Ascending aorta (tissue), 2 donors: ENCODE measurements at regions of chr20 and their contacts with region 1.

Region 1: DNA sequence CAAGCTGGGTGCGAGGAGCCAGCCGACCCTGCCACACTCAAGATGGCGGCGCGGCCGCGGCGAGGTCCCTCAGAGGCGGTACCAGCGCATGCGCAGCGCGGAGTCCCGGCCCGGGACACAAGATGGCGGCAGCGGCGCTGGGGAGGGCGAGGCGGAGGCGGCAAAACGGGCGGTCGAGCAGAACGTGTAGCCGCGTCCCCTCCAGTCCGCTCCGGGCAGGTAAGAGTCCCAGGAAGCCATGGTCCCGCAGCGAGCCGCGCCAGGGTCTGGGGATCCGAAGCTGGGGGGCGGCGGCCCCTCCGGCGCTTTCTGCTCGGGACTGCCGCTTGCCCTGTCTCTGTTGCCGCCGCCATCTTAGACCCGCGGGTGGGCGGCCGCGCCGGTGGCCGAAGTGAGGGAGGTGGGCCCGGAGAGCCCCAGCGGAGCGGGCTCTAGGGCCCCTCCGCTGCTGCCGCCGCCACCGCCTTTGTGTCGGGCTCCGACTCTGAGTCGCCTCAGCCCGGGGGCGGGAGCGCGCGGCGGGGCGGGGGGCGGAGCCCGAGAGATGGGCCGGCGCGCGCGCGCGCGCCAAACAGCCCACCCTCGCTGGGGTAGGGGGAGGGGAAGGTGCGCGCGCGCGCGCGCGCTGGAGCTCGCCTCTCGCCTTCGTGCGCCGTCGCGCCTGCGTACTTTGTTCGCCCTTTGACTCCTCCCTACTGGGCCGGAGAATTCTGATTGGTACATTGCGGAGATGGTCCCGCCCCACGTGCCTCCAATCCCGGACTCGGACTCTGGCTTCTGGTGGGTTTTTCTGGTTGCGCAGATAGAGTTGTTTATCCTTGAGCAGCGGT is at the start of gene PCIF1:
- DNase-seq: peak; percentile 92 to 99
- H3K4me3 ChIP-seq: peak within 1 kb of the TSS; percentile 73 to 95
- H3K27ac ChIP-seq: peak within 1 kb of the TSS; percentile 98 to 100
- H3K4me1 ChIP-seq: peaks cover 5 to 16% of the 10 kb centered on the region in 2 donors
- H3K27me3 ChIP-seq: no peaks in the 10 kb centered on the region
- CTCF ChIP-seq: no peak
- total RNA-seq, gene PCIF1: 45.7 TPM

Region 2: DNA sequence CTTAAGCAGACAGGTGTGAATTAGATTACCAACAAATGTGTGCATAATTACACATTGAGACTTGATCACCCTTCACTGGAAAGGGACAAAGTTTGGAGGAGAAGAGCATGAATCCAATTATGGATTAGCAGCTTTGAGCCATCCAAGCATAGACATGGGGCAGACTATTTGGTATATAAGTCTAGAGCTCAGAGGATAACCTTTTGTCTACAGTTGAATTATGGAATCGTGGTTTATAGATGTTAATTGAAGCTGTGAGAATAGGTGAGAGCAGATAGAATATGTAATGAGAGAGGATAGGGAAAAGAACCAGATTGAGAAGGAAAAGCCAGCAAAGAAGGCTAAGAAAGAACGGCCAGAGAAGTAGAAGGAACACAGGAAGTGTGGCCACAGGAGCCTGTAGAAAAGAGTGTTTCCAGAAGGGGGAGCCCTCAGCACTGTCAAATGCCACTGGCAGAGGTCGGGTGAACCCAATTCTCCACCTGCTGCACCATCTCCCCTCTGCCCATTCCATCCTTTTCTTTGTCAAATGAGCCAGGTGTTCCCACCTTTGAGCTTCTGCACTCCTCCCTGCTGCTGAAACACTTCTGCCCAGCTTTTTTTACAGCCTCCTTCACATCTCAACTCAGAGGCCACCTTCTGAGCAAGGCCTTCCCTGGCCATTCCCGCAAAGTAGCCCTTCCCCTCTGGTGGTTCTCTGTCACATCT is 135.7 kb before region 1 on chr20:
- intact Hi-C with region 1: loop called (anchors 5 kb)
- DNase-seq: peak in 1 of 2 donors; percentile 82
- H3K4me3 ChIP-seq: no peak overlapping the region
- H3K27ac ChIP-seq: peak overlapping the region; percentile 44 to 51
- H3K4me1 ChIP-seq: no peaks in the 10 kb centered on the region
- H3K27me3 ChIP-seq: no peaks in the 10 kb centered on the region
- CTCF ChIP-seq: peak; percentile 70 to 77 (median 75)

Region 3: DNA sequence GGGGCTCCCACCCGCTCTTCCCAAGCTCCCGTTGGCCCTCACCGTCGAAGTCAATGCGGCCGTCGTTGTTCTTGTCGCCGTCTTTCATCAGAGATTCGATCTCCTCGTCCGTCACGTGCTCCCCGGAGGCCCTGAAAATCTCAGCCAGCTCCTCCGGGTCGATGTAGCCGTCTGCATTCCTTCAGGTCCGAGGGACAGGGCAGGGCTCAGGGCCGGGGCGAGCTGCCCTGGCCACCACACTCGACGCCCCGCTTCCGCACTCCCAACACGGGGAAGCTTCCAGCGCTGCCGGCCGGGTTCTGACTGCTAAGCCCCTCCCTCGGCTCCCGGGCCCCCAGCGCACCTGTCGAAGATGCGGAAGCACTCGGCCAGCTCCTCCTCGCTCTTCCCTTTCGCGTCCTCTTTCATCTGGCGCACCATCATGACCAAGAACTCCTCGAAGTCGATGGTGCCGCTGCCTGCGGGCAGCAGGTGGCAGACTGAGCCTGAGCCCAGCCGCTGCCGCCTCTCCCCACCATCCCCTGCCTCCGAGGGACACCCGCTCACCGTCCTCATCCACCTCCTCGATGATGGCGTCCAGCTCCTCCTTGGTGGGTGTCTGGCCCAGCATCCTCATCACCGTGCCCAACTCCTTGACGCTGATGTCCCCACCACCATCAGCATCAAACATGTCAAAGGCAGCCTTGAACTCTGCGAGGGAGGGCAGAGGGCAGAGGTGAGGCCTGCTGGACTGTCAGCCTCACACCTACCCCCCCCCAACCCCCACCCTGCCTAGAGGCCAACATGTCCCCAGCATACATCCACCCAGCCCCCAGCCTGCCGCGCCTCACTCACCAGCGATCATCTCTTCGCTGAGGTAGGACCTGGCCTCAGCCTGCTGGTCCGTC is 110.6 kb before region 1 on chr20:
- intact Hi-C with region 1: no loop called
- DNase-seq: no peak
- H3K4me3 ChIP-seq: peak overlapping the region; percentile 15 to 27
- H3K27ac ChIP-seq: peak overlapping the region in 1 of 2 donors; percentile 10
- H3K4me1 ChIP-seq: peaks cover 15 to 43% of the 10 kb centered on the region in 2 donors
- H3K27me3 ChIP-seq: no peaks in the 10 kb centered on the region
- CTCF ChIP-seq: peak in 1 of 3 experiments; percentile 44

Region 4: GRCh38 chr20:45857114-45857881 is 77.5 kb before region 1 on chr20 and contains the starts of genes ACOT8 and ZSWIM3:
- intact Hi-C with region 1: loop called (anchors 2 kb)
- DNase-seq: peak; percentile 96 to 99
- H3K4me3 ChIP-seq: peak within 1 kb of the TSS; percentile 95 to 96
- H3K27ac ChIP-seq: peak within 1 kb of the TSS; percentile 62 to 75
- H3K4me1 ChIP-seq: peaks cover 3 to 29% of the 10 kb centered on the region in 2 donors
- H3K27me3 ChIP-seq: no peaks in the 10 kb centered on the region
- CTCF ChIP-seq: no peak
- total RNA-seq, gene ACOT8: 34.4 TPM
- total RNA-seq, gene ZSWIM3: 6.8 TPM

Region 5: GRCh38 chr20:45890985-45891983 is 43.5 kb before region 1 on chr20 and contains the starts of genes CTSA and NEURL2:
- intact Hi-C with region 1: loop called (anchors 1 kb)
- DNase-seq: peak; percentile 76 to 96
- H3K4me3 ChIP-seq: peak within 1 kb of the TSS; percentile 71 to 87
- H3K27ac ChIP-seq: peak within 1 kb of the TSS; percentile 68 to 71
- H3K4me1 ChIP-seq: peaks cover 8 to 12% of the 10 kb centered on the region in 2 donors
- H3K27me3 ChIP-seq: no peaks in the 10 kb centered on the region
- CTCF ChIP-seq: no peak
- total RNA-seq, gene CTSA: 82.0 TPM
- total RNA-seq, gene NEURL2: 4.0 TPM

Region 6: DNA sequence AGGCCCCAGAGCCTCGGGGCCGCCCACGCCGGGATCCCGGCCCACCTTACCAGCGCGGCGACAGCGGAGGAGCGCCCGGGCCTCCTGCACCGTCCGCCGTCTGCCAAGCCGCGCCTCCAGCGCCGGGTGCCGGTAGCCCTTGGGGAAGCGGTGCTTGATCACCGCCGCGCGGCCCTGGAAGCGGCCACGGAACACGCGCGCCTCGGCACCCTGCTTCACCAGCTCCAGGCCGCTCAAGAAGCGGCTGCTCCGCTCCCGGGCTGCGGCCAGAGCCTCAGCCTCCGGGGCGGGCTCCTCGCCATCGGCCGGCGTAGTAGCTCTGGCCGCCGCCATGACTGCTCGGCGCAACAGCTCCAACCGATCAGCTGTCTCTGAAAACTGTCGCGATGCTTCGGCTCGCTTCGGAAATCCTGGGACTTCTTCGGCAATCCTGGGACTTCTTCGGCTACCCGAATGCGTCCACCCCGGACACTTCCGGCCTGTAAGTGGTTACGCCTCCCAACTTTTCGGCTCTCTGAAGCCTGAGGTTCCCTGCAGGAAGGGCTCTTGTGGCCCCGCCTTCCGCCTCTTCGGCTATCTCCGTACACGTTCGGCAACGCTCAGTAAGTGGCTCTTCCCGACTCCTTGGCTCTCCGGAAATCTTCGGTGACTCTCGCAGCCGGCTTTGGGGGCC is 754.4 kb after region 1 on chr20 and contains the start of gene TP53RK:
- intact Hi-C with region 1: loop called (anchors 2 kb)
- DNase-seq: peak; percentile 98 to 99
- H3K4me3 ChIP-seq: peak within 1 kb of the TSS; percentile 66 to 69
- H3K27ac ChIP-seq: peak within 1 kb of the TSS; percentile 84 to 89
- H3K4me1 ChIP-seq: peaks cover 9 to 14% of the 10 kb centered on the region in 2 donors
- H3K27me3 ChIP-seq: no peaks in the 10 kb centered on the region
- CTCF ChIP-seq: peak; percentile 38 to 62 (median 41)
- total RNA-seq, gene TP53RK: 30.8 TPM